ENCODE measurements at regions of chr2 and their contacts with region 1.

Region 1: GRCh38 chr2:112481050-112481527 is 867 bp upstream of the TTL start:
- DNase-seq: peak; percentile 91
- H3K4me3 Mint-ChIP-seq: peak overlapping the region; percentile 95
- H3K27ac Mint-ChIP-seq: peak overlapping the region; percentile 95
- H3K4me1 Mint-ChIP-seq: peaks cover 32% of the 10 kb centered on the region
- H3K27me3 Mint-ChIP-seq: peaks cover 12% of the 10 kb centered on the region

Region 2: GRCh38 chr2:112449854-112450253 is 31.2 kb before region 1 on chr2:
- CTCF ChIA-PET with region 1: no interaction called
- DNase-seq: no peak
- H3K4me3 Mint-ChIP-seq: no peak overlapping the region
- H3K27ac Mint-ChIP-seq: no peak overlapping the region
- H3K4me1 Mint-ChIP-seq: no peaks in the 10 kb centered on the region
- H3K27me3 Mint-ChIP-seq: peaks cover 8% of the 10 kb centered on the region

Region 3: DNA sequence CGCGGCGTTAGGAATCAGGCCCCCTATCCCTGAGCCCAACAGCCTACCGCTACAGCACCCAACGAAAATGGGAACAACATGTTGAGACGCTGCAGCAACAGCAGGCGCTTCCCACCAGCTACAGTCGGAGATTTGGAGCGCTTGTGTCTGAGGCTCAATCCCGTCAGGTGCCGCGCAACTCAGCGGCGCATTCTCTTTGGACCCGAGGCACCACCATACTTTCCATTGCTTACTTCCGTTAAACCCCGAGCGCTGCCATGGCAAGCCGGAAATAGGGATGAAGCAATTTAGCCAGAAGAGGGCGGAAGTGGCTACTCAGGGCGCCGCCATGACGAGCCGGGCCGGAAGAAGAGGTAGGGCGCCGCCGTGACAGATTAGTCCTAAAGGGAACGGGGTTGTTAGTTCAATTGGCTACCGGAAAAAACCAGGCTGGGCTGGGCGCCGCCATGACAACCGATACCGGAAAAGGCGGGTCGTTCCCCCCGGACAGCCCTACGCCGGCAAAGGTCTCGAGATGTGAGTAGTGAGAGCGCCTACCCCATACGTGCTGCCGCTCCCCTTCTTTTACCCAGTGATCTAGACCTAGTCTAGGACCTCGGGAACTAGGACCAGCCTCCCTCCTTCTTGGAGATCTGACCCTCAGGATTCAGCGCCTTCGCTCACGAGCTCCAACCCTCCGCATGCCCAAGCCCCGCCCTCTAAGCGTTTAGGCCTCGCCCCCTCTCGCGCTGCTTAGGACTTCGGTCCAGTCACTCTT is 103.2 kb after region 1 on chr2 and contains the start of gene CHCHD5:
- CTCF ChIA-PET with region 1: interaction called, 20 read pairs
- DNase-seq: peak; percentile 97
- H3K4me3 Mint-ChIP-seq: peak within 1 kb of the TSS; percentile 96
- H3K27ac Mint-ChIP-seq: peak within 1 kb of the TSS; percentile 98
- H3K4me1 Mint-ChIP-seq: peaks cover 42% of the 10 kb centered on the region
- H3K27me3 Mint-ChIP-seq: no peaks in the 10 kb centered on the region